ENCODE measurements at regions of chr3 and their contacts with region 1.

Region 1: DNA sequence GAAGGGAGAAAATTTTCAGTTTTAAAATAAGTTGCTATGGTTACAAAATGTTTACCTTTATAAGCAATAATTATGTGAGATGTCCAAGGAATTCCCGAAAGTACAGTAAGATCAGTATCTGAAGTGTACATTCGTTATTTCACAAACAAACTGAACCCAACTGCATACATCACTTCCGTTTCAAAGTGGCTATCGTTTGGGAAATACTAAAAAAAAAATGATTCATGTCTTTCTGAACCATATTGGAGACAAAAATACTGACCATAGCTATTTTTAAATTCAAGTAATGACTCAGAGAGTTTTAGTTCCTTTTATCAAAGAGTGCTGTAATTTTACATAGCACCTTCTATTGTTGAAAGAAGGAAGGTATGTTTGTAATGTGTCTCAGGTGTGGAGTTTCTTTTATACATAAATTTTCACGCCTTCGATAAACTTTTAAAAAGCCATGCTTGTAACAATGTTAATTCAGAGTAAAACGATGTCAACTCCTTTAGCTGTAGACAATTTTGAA is 8.0 kb upstream of the ANKRD28 start:
- DNase-seq: no peak
- ATAC-seq: peak; percentile 83
- H3K4me3 Mint-ChIP-seq: peak overlapping the region; percentile 45
- H3K27ac Mint-ChIP-seq: peak overlapping the region; percentile 80
- H3K4me1 Mint-ChIP-seq: peaks cover 60% of the 10 kb centered on the region
- H3K27me3 Mint-ChIP-seq: no peaks in the 10 kb centered on the region
- CTCF ChIP-seq: no peak

Region 2: DNA sequence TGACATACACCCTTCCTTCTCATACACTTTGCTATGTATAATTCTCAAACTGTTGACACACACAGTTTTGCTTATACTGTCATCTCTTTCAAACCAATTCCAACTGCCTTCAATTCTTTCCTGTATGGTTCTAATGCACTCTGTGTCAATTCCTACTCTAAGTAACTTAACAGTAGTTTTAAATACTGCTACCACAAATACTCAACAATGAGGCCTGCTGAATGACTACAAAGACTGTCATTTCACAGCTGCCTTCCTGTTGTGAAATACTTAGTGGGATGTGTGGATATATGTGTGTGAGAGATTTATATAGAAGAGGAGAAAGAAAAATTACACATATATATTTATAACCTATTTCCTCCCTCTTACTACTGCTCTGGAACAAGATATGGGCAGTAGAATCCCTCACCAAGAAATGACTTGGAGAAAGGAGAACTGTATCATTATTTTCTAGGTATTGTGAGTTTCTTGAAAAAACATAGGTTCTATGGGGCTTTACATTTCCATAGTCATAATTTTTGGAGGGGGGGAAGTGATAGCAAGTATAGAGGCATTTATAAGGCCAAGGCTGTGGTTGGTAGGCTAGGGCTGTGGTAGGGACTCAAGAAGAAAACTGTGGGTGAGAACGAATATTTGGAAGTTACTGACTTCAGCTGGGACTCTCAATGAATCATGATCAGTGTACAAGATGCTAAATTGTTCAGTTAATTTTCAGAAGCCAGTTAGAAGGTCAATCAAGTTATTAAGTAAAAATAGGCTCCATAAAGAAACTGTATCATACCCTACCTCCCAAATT is 96.7 kb before region 1 on chr3:
- CTCF ChIA-PET with region 1: no interaction called
- POLR2A ChIA-PET with region 1: no interaction called
- intact Hi-C with region 1: no loop called
- DNase-seq: no peak
- ATAC-seq: no peak
- H3K4me3 Mint-ChIP-seq: no peak overlapping the region
- H3K27ac Mint-ChIP-seq: no peak overlapping the region
- H3K4me1 Mint-ChIP-seq: no peaks in the 10 kb centered on the region
- H3K27me3 Mint-ChIP-seq: no peaks in the 10 kb centered on the region
- CTCF ChIP-seq: no peak

Region 3: GRCh38 chr3:15722877-15723620 is 82.8 kb before region 1 on chr3:
- CTCF ChIA-PET with region 1: no interaction called
- POLR2A ChIA-PET with region 1: no interaction called
- intact Hi-C with region 1: loop called (anchors 5 kb)
- DNase-seq: no peak
- ATAC-seq: no peak
- H3K4me3 Mint-ChIP-seq: no peak overlapping the region
- H3K27ac Mint-ChIP-seq: no peak overlapping the region
- H3K4me1 Mint-ChIP-seq: no peaks in the 10 kb centered on the region
- H3K27me3 Mint-ChIP-seq: no peaks in the 10 kb centered on the region
- CTCF ChIP-seq: no peak

Region 4: GRCh38 chr3:15768421-15769255 is 37.2 kb before region 1 on chr3:
- CTCF ChIA-PET with region 1: no interaction called
- POLR2A ChIA-PET with region 1: no interaction called
- intact Hi-C with region 1: no loop called
- DNase-seq: no peak
- ATAC-seq: no peak
- H3K4me3 Mint-ChIP-seq: no peak overlapping the region
- H3K27ac Mint-ChIP-seq: no peak overlapping the region
- H3K4me1 Mint-ChIP-seq: peaks cover 37% of the 10 kb centered on the region
- H3K27me3 Mint-ChIP-seq: no peaks in the 10 kb centered on the region
- CTCF ChIP-seq: no peak